Activated B cell treated with CpG ODN at 0.5 μM for 24 hours (primary cell): ENCODE measurements at regions of chr1 and their contacts with region 1.

Region 1: DNA sequence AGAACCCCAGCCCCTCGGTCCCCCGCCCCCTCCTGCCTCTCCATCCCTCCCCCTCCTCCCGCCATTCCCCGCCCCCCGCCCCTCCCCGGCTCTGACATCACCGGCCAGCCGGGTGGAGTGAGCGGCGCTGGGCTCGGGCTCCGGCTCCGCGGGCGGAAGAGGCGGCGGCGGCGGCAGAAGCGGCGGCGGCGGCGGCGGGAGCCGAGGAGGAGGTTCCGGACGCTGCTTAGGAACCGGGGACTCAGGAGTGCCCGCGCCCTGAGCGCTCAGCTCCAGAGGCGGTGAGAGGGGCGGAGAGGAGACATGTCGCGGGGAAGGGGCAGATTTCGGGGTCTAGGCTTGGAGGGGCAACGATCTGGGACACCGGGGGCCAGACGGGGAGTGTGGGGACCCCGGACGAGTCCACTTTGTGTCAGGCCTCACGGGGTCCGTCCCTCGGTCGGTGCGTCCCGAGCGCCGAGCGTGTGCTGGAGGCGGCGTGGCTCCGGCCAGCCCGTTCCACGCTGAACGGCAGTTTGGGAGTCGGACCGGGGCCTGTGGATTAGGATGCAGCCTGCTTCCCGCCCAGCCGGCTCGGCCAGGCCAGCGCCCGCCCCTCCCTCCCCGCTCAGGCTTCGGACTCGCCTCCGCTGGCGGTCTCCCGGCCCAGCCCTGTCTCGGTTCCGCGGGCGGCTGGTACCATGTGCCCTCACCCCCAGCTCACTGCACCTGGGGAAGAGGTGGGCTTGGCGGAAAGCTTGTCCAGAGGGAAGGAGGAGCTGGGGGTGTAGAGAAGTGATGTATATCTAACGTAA is at the start of gene PEA15:
- DNase-seq: peak; percentile 69
- ATAC-seq: peak; percentile 51
- H3K4me3 Mint-ChIP-seq: peak within 1 kb of the TSS; percentile 85
- H3K27ac Mint-ChIP-seq: peak within 1 kb of the TSS; percentile 95
- H3K4me1 Mint-ChIP-seq: peaks cover 67% of the 10 kb centered on the region
- H3K27me3 Mint-ChIP-seq: no peaks in the 10 kb centered on the region
- CTCF ChIP-seq: no peak
- total RNA-seq, gene PEA15: 107 and 111 TPM in 2 replicates

Region 2: GRCh38 chr1:159924981-159925712 is 280.3 kb before region 1 on chr1 and contains the start of gene TAGLN2:
- CTCF ChIA-PET with region 1: no interaction called
- POLR2A ChIA-PET with region 1: no interaction called
- intact Hi-C with region 1: loop called (anchors 5 kb)
- DNase-seq: peak; percentile 94
- ATAC-seq: peak; percentile 69
- H3K4me3 Mint-ChIP-seq: peak within 1 kb of the TSS; percentile 99
- H3K27ac Mint-ChIP-seq: peak within 1 kb of the TSS; percentile 99
- H3K4me1 Mint-ChIP-seq: peaks cover 56% of the 10 kb centered on the region
- H3K27me3 Mint-ChIP-seq: no peaks in the 10 kb centered on the region
- CTCF ChIP-seq: no peak
- total RNA-seq, gene TAGLN2: 327 and 364 TPM in 2 replicates

Region 3: GRCh38 chr1:160031365-160032164 is 173.9 kb before region 1 on chr1 and contains the start of gene PIGM:
- CTCF ChIA-PET with region 1: no interaction called
- POLR2A ChIA-PET with region 1: no interaction called
- intact Hi-C with region 1: no loop called
- DNase-seq: peak; percentile 81
- ATAC-seq: peak; percentile 98
- H3K4me3 Mint-ChIP-seq: peak within 1 kb of the TSS; percentile 97
- H3K27ac Mint-ChIP-seq: peak within 1 kb of the TSS; percentile 82
- H3K4me1 Mint-ChIP-seq: peaks cover 26% of the 10 kb centered on the region
- H3K27me3 Mint-ChIP-seq: no peaks in the 10 kb centered on the region
- CTCF ChIP-seq: no peak
- total RNA-seq, gene PIGM: 4.5 and 5.3 TPM in 2 replicates

Region 4: GRCh38 chr1:160219062-160219929 is 13.9 kb after region 1 on chr1:
- CTCF ChIA-PET with region 1: interaction called, 13 read pairs
- POLR2A ChIA-PET with region 1: interaction called, 14 read pairs
- intact Hi-C with region 1: no loop called
- DNase-seq: no peak
- ATAC-seq: no peak
- H3K4me3 Mint-ChIP-seq: no peak overlapping the region
- H3K27ac Mint-ChIP-seq: peak overlapping the region; percentile 20
- H3K4me1 Mint-ChIP-seq: no peaks in the 10 kb centered on the region
- H3K27me3 Mint-ChIP-seq: no peaks in the 10 kb centered on the region
- CTCF ChIP-seq: no peak

Region 5: DNA sequence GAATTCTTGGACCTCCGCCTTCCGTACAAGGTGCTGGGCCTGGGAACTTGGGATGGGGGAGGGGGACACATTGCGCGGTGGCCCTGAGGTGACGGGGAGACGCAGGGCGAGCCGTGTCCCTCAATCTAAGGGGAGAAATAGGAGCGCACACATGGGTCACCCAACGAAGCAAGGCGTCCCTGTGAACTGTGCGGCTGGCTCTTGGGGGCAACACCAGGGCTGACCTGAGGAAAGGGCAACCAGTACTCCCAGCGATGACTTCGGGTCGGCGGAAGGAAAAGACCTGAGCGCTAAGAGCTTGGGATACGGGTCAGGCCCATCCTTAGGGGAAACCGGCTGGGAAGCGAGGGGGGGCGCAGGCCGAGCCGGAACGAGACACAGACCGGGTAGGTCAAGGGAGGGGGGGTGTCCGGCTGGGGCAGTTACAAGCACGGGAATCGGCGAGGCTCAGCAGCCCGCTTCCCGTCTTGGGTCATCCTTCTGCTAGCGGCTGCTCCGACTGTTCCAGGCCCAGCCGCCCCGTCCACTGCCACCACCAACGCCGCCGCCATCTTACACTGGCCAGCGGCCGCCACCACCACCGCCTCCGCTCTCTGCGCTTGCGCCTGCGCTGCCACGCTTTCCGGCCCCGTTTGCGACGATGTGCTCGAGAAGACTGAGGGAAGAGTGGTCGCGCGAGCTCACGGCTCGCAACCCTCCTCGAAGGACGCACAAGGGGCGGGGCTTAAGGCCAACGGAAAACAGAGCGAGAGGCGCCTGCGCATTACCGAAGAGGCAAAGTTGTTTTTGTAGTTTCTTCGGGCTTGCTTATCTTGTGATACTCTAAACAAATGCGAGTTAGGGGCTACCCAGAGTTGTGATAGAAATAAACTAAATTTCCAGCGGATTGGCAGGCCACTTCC is 56.7 kb after region 1 on chr1 and contains the start of gene DCAF8:
- CTCF ChIA-PET with region 1: interaction called, 3 read pairs
- POLR2A ChIA-PET with region 1: interaction called, 34 read pairs
- intact Hi-C with region 1: loop called (anchors 1 kb)
- DNase-seq: peak; percentile 95
- ATAC-seq: peak; percentile 91
- H3K4me3 Mint-ChIP-seq: peak within 1 kb of the TSS; percentile 99
- H3K27ac Mint-ChIP-seq: peak within 1 kb of the TSS; percentile 98
- H3K4me1 Mint-ChIP-seq: peaks cover 47% of the 10 kb centered on the region
- H3K27me3 Mint-ChIP-seq: no peaks in the 10 kb centered on the region
- CTCF ChIP-seq: no peak
- total RNA-seq, gene DCAF8: 155 and 172 TPM in 2 replicates

Region 6: GRCh38 chr1:160342953-160343869 is 137.8 kb after region 1 on chr1 and contains the starts of genes COPA and NCSTN:
- CTCF ChIA-PET with region 1: no interaction called
- POLR2A ChIA-PET with region 1: interaction called, 4 read pairs
- intact Hi-C with region 1: loop called (anchors 1 kb)
- DNase-seq: peak; percentile 83
- ATAC-seq: peak; percentile 88
- H3K4me3 Mint-ChIP-seq: peak within 1 kb of the TSS; percentile 99
- H3K27ac Mint-ChIP-seq: peak within 1 kb of the TSS; percentile 98
- H3K4me1 Mint-ChIP-seq: peaks cover 68% of the 10 kb centered on the region
- H3K27me3 Mint-ChIP-seq: no peaks in the 10 kb centered on the region
- CTCF ChIP-seq: no peak
- total RNA-seq, gene COPA: 161 and 174 TPM in 2 replicates
- total RNA-seq, gene NCSTN: 108 and 118 TPM in 2 replicates